ENCODE measurements at regions of chr10 and their contacts with region 1.

Region 1: GRCh38 chr10:97701438-97702069 is 12.0 kb upstream of the MARVELD1 start:
- DNase-seq: no peak
- ATAC-seq: peak; percentile 96
- H3K4me3 ChIP-seq: no peak overlapping the region
- H3K27ac ChIP-seq: no peak overlapping the region
- H3K4me1 ChIP-seq: 0 out of 2 replicates have a peak, but pooled peaks cover 3% of the 10 kb centered on the region
- H3K27me3 ChIP-seq: no peaks in the 10 kb centered on the region; a peak in 2 of 4 replicates
- CTCF ChIP-seq: peak; percentile 87 to 91 (median 89)
- EP300 ChIP-seq: no peak
- POLR2A ChIP-seq: no peak
- RAD21 ChIP-seq: peak; percentile 89

Region 2: DNA sequence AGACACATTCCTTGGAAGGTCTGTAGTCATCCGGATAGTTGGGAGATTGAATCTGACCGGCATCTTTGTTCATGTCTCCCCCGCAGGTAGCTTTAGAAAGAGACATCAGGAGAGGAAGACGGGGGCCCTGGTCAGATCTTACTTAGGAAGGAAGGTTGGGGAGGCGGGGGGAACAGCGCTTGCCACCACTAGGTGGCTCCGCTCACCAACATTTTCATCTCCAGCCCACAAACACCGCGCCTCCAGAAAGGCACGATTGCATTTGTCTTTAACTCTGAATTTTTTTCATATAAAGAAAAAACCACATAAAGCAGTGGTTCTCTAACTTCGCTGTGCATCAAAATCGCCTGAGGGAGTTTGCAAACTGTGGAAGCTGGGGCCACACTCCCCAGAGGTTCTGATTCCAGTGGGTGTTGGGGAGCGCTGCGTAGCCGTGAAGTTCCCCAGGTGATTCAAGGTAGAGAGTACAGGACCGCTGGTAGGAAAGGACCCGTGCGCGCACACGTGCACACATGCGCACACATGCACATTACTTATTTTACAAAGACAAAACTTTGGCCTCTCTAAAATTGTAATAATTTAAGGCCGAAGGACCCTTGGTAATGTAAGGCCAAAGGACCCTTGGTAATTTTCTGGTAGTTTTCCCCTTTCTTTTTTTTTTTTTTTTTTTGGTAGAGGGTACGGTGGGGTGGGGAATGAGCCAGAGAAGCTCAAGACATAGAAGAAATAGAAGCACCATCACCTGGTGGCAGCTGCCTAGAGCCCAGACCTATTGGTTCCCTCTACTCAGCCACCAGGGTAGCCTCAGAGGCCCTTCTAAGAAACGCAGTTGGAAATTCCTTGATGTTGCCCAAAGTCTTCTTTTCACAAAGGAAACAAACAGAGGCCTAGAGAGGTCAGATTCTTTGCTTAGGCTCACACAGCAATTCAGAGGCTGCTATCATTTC is 1305.3 kb before region 1 on chr10:
- CTCF ChIA-PET with region 1: no interaction called
- POLR2A ChIA-PET with region 1: no interaction called
- RAD21 ChIA-PET with region 1: no interaction called
- SMC1A ChIA-PET with region 1: no interaction called
- in situ Hi-C with region 1: loop called (anchors 5 kb)
- intact Hi-C with region 1: no loop called
- DNase-seq: no peak
- ATAC-seq: peak; percentile 97
- H3K4me3 ChIP-seq: no peak overlapping the region
- H3K27ac ChIP-seq: no peak overlapping the region
- H3K4me1 ChIP-seq: no peaks in the 10 kb centered on the region
- H3K27me3 ChIP-seq: peaks cover 3 to 4% of the 10 kb centered on the region in 2 experiments; a peak in 3 of 4 replicates
- CTCF ChIP-seq: peak; percentile 86 to 91 (median 87)
- EP300 ChIP-seq: no peak
- POLR2A ChIP-seq: no peak
- RAD21 ChIP-seq: peak; percentile 84

Region 3: GRCh38 chr10:97686962-97687784 is 14.4 kb before region 1 on chr10 and contains the start of gene AVPI1:
- CTCF ChIA-PET with region 1: interaction called, 115 read pairs
- POLR2A ChIA-PET with region 1: interaction called, 3 read pairs
- RAD21 ChIA-PET with region 1: interaction called, 24 read pairs
- SMC1A ChIA-PET with region 1: interaction called, 38 read pairs
- in situ Hi-C with region 1: no loop called
- intact Hi-C with region 1: no loop called
- DNase-seq: peak; percentile 76
- ATAC-seq: peak; percentile 94
- H3K4me3 ChIP-seq: peak within 1 kb of the TSS; percentile 65
- H3K27ac ChIP-seq: 0 out of 2 replicates have a peak within 1 kb of the TSS, but pooled peaks have one; percentile 19
- H3K4me1 ChIP-seq: peaks cover 18% of the 10 kb centered on the region
- H3K27me3 ChIP-seq: no peaks in the 10 kb centered on the region; a peak in 1 of 4 replicates
- CTCF ChIP-seq: no peak
- EP300 ChIP-seq: peak in 1 of 2 experiments; percentile 48; a peak in 3 of 4 replicates
- POLR2A ChIP-seq: peak; percentile 76
- RAD21 ChIP-seq: no peak
- polyA plus RNA-seq, gene AVPI1: 0.08 to 0.13 TPM

Region 4: GRCh38 chr10:97731346-97732051 is 29.9 kb after region 1 on chr10:
- CTCF ChIA-PET with region 1: interaction called, 416 read pairs
- POLR2A ChIA-PET with region 1: interaction called, 6 read pairs
- RAD21 ChIA-PET with region 1: interaction called, 12 read pairs
- SMC1A ChIA-PET with region 1: interaction called, 28 read pairs
- in situ Hi-C with region 1: no loop called
- intact Hi-C with region 1: loop called (anchors 1 kb)
- DNase-seq: no peak
- ATAC-seq: peak; percentile 78
- H3K4me3 ChIP-seq: no peak overlapping the region
- H3K27ac ChIP-seq: no peak overlapping the region
- H3K4me1 ChIP-seq: peaks cover 2% of the 10 kb centered on the region; the same call in 1 of the 2 replicates
- H3K27me3 ChIP-seq: no peaks in the 10 kb centered on the region
- CTCF ChIP-seq: peak; percentile 78 to 84 (median 80)
- EP300 ChIP-seq: no peak
- POLR2A ChIP-seq: no peak
- RAD21 ChIP-seq: peak; percentile 91

Region 5: GRCh38 chr10:98045785-98046389 is 344.3 kb after region 1 on chr10:
- CTCF ChIA-PET with region 1: interaction called, 12 read pairs
- POLR2A ChIA-PET with region 1: no interaction called
- RAD21 ChIA-PET with region 1: interaction called, 10 read pairs
- SMC1A ChIA-PET with region 1: interaction called, 4 read pairs
- in situ Hi-C with region 1: no loop called
- intact Hi-C with region 1: loop called (anchors 10 kb)
- DNase-seq: no peak
- ATAC-seq: peak; percentile 90
- H3K4me3 ChIP-seq: no peak overlapping the region
- H3K27ac ChIP-seq: no peak overlapping the region
- H3K4me1 ChIP-seq: no peaks in the 10 kb centered on the region
- H3K27me3 ChIP-seq: peaks cover 2 to 5% of the 10 kb centered on the region in 2 experiments; a peak in 2 of 4 replicates
- CTCF ChIP-seq: peak; percentile 69 to 91 (median 86)
- EP300 ChIP-seq: no peak
- POLR2A ChIP-seq: no peak
- RAD21 ChIP-seq: peak; percentile 27; the same call in 1 of the 2 replicates

Measured in GM12878 (cell line).